ENCODE measurements at regions of chr2 and their contacts with region 1.

Region 1: GRCh38 chr2:177724398-177725287 is 332.1 kb downstream of the AGPS start:
- DNase-seq: peak; percentile 15 to 38
- H3K4me3 ChIP-seq: no peak overlapping the region
- H3K27ac ChIP-seq: no peak overlapping the region
- H3K4me1 ChIP-seq: no peaks in the 10 kb centered on the region
- H3K27me3 ChIP-seq: no peaks in the 10 kb centered on the region
- CTCF ChIP-seq: peak; percentile 43 to 68 (median 58)
- POLR2A ChIP-seq: no peak

Region 2: DNA sequence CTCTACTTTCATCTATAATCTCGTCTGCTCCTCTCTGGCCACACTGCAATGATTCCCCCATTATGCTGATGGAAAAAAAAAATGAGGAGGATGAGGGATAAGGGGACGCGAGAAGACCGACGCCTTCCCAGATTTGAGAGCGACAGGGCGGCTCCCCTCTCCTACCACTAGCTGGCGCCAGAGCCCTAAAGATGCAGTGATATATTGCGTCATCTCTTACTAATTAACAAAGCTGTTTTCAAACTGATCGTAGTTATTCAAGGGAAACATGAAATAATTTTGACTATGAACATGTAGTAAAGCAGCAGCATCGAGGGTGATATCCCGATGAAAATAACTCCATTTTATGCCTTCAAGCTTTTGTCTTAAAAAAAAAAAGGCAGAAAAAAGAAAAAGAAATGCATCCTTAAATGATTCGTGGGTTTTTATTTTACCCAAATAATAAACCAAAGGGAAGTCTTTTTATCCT is 560.0 kb before region 1 on chr2:
- intact Hi-C with region 1: loop called (anchors 10 kb)
- DNase-seq: peak; percentile 78 to 84
- H3K4me3 ChIP-seq: peak overlapping the region in 1 of 3 donors; percentile 7
- H3K27ac ChIP-seq: peak overlapping the region; percentile 78 to 90 (median 80)
- H3K4me1 ChIP-seq: peaks cover 14 to 17% of the 10 kb centered on the region in 2 donors
- H3K27me3 ChIP-seq: no peaks in the 10 kb centered on the region
- CTCF ChIP-seq: peak; percentile 99 to 100 (median 100)
- POLR2A ChIP-seq: no peak

Region 3: DNA sequence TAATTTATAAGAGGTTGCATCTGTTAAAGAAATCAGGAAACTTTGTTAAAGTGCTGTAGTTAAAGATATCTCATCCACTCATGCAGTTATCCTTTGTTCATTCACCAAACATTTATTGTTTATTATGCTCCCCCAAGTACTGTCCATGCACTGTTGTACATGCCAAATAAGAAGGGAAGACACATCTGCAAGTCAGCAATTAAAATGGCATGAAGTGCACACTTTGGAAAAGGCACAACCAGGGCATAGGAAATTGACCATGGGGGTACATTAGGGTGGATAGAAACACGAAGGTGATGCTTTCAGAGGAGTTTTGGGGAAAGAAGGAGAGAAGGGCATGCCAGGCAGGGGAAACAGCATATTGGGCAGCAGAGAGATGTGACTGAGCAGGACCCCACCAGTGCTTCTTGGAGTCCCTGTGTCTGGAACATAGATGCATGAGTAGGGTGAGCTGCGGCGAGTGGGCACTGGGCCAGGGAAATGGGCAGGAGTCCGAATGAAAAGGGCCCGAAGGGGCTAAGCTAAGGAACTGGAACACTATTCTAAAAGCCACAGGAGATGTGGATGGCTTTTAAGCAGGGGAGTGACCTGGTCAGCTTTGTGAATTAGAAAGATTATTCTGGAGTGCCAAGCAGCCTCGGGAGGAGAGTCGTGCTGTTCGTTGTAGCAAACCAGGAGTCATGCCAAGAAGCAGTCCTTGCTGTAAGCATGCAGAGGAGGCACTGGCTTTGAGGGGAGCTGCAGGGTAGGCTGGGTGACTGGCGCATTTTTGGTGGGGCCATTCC is 15.8 kb before region 1 on chr2:
- intact Hi-C with region 1: no loop called
- DNase-seq: peak in 1 of 2 donors; percentile 24
- H3K4me3 ChIP-seq: no peak overlapping the region
- H3K27ac ChIP-seq: no peak overlapping the region
- H3K4me1 ChIP-seq: no peaks in the 10 kb centered on the region
- H3K27me3 ChIP-seq: no peaks in the 10 kb centered on the region
- CTCF ChIP-seq: no peak
- POLR2A ChIP-seq: no peak

Region 4: GRCh38 chr2:177921726-177922125 is 197.1 kb after region 1 on chr2:
- intact Hi-C with region 1: no loop called
- DNase-seq: no peak
- H3K4me3 ChIP-seq: no peak overlapping the region
- H3K27ac ChIP-seq: no peak overlapping the region
- H3K4me1 ChIP-seq: no peaks in the 10 kb centered on the region
- H3K27me3 ChIP-seq: no peaks in the 10 kb centered on the region
- CTCF ChIP-seq: no peak
- POLR2A ChIP-seq: no peak